ENCODE measurements at regions of chr6 and their contacts with region 1.

Region 1: GRCh38 chr6:75431379-75431778 is 62.2 kb downstream of the FILIP1 start:
- DNase-seq: peak; percentile 41
- ATAC-seq: peak; percentile 92

Region 2: GRCh38 chr6:75488033-75488432 is 56.7 kb after region 1 on chr6:
- intact Hi-C with region 1: loop called (anchors 10 kb)
- DNase-seq: no peak
- ATAC-seq: peak; percentile 6

Region 3: DNA sequence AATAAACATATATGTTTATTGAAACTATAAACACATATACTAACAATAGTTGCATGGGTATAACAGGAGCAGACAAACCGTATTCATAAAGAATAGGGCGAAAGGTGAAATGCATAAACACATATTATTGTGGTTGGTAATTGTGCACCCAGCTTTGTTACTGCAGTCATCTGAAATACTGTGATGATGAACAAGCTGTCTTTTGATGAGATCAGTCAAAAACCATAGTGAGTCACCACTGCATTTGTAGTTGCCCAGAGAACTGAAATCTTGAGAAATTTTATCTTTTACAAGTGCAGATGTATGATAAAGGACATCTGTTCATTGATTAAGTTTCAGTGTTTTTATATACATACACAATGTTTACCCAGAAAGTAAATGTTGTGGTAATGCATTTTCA is 451.4 kb after region 1 on chr6:
- intact Hi-C with region 1: no loop called
- DNase-seq: no peak
- ATAC-seq: no peak